ENCODE measurements at regions of chrX and their contacts with region 1.

Region 1: DNA sequence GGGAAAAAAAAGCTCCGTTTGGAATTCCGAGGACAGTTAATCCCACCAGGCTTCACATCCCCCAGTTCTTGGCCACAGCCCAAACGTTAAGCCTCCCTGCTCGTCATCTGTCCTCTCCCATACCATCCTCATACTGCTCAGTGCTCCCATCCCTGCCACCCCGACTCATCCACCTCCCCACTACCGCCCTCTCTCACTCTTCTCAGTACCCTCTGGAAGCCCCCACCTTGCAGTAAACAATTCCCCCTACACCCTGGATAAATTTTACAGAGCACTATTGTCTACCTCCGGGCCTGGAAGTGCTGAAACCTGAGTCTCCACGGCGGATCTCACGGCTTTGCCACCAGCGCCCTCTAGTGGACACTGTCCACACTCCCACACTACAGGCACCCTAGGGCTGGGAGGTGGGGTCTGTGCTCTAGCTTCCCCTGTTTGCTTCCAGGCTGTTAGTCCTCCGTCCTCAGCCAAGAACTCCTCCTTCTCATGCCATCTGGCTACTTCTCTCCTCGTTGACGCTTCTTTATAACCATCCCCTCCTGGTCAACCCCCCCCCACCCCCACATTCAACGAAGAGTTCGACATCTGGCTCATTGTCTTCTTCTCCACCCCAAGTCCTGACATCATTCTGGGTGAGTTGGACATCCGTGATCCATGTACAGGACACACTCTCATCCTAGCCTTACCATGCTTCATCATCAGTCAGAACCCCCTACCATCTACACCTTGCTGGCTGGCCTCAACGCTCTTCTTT is 54.5 kb downstream of the RTL9 start:
- DNase-seq: no peak
- H3K4me3 ChIP-seq: no peak overlapping the region
- CTCF ChIP-seq: peak; percentile 79

Region 2: DNA sequence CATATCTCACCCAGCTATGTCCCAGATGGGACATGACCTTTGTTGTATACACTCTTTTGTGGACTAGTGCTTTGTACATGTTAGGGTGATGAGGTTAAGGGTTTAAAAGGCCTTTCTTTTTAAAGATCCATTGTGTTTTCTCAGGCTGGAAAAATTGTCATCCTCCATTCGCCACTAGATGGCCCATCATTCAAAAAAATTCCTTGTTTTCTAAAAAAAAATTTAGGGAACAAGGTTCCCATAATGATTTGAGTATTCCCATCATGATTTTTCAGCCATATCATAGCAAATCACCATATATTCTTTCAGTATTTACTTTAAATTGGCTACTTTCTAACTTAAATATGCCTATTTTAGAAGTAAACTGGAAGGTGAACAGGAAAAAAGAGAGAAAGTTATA is 502.1 kb before region 1 on chrX:
- CTCF ChIA-PET with region 1: interaction called, 11 read pairs
- POLR2A ChIA-PET with region 1: no interaction called
- DNase-seq: no peak
- H3K4me3 ChIP-seq: no peak overlapping the region
- CTCF ChIP-seq: no peak

Region 3: GRCh38 chrX:110167952-110168451 is 245.1 kb before region 1 on chrX:
- CTCF ChIA-PET with region 1: interaction called, 970 read pairs
- POLR2A ChIA-PET with region 1: no interaction called
- DNase-seq: no peak
- H3K4me3 ChIP-seq: no peak overlapping the region
- CTCF ChIP-seq: peak; percentile 55

Region 4: GRCh38 chrX:110180176-110180927 is 232.8 kb before region 1 on chrX:
- CTCF ChIA-PET with region 1: interaction called, 20 read pairs
- POLR2A ChIA-PET with region 1: interaction called, 3 read pairs
- DNase-seq: no peak
- H3K4me3 ChIP-seq: no peak overlapping the region
- CTCF ChIP-seq: no peak

Region 5: DNA sequence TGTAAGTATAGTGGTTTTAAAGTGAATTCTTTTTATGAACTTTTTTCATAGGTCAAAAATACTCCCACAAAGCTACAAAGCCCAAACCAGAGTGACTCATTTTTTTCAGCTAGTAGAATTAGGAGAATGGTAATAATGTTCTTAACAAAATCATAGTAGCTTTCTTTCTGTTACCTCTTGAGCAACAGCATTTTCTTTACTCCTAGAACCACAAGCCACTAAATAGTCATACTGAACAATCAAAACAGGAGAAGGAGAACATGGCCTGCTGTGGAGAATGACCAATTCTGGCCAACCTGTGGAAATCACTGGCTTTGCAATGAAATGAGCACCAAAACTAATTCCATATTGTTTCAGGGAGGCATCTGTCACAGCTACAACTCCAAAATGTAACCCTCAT is 208.2 kb before region 1 on chrX:
- CTCF ChIA-PET with region 1: interaction called, 12 read pairs
- POLR2A ChIA-PET with region 1: no interaction called
- DNase-seq: no peak
- H3K4me3 ChIP-seq: no peak overlapping the region
- CTCF ChIP-seq: no peak

Region 6: DNA sequence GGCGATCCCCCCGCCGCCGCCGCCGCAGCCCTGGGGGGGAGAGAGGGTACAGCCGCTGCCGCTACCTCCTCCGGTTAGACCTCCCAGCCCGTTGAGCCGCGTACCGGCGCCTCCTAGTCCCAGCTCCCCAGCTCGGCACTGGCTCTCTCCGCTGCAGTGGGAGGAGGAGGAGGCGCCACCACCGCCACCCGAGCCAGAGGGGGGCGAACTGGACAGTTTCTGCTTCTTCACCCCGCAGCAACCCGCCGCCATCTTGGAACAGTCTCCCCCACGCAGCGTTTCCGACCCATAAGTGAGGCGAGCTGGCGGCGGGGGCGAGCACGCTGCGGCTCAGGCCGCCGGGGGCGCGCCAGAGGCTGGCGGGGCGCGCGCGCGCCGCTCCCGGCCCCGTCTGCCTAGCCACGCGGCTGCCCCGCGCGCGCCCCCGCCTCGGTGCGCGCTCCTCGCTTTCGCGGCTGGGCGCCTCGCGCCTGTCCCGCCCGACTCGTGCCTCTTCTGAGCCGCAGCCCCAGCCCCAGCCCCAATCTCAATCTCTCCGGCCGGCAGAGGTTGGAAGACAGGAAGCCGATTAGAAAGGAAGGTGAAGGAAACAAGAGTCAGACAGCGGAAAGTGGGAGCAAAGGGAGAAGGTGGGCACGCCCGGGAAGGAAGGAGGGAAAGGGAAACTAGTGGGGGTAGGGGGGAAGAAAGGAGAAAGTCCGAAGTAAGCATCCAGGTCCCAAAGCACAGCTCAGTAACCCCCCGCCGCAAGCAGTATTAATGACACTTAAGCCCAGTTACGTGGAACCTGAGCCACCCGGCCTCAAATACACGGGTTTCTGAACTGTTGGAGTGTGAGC is 95.1 kb before region 1 on chrX and contains the start of gene AMMECR1:
- CTCF ChIA-PET with region 1: interaction called, 58 read pairs
- POLR2A ChIA-PET with region 1: no interaction called
- DNase-seq: no peak
- H3K4me3 ChIP-seq: peak within 1 kb of the TSS; percentile 73
- CTCF ChIP-seq: no peak

Region 7: DNA sequence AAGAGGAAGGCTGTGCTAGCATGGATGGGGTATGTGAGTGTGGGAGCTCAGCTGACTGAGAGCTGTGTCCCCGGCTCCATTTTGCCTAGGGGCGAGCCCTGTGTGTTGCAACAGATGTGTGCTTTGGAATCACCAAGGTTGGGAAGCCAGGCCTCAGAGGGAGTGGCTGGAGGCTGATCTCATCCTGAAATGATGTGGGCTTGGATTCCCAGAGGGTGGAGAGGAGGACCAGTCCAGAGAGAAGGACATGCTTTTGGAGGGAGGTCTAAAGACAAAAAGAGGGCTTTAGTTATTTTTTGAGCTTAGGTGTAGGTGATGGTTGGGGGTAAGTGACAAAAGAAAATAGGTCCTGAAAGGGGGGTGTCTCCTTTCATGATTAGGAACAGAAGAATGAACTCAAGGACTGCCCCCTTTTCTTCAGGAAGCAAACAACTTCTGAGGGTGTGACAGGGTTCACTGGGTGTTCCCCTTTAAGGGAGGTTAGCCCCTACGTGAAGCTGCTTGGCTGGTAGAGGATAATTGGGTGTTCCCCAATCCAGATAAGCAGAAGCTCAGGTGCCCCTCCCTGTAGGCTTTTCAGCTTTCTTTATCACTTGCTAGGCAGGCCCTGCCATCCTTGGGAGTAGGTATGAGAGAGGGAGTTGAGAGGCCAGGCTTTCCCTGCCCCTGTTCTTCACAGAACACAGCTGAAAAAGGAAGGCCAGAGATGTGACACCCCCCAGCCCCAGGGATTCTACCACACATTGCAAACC is 10.5 kb before region 1 on chrX:
- CTCF ChIA-PET with region 1: interaction called, 44 read pairs
- POLR2A ChIA-PET with region 1: interaction called, 6 read pairs
- DNase-seq: no peak
- H3K4me3 ChIP-seq: no peak overlapping the region
- CTCF ChIP-seq: no peak

Region 8: DNA sequence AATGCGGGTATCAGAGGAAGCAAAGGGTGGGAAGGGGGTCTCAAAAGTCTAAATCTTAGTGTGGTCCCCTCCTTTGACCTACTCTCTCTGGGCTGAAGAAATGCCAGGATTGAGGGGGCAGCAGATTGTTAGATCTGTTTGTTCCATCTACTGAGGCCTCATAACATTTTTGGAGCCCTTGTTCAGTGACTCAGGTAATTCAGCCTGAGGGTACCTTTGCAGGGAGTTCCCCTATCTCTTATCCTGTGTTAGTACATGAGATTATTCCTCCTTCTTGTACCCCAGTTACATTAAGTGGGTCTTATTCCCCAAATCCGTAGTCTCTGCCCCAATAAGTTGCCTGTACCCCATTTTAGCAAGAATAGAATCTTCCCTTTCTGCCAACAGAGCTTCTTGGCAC is 24.5 kb after region 1 on chrX:
- CTCF ChIA-PET with region 1: no interaction called
- POLR2A ChIA-PET with region 1: no interaction called
- DNase-seq: no peak
- H3K4me3 ChIP-seq: no peak overlapping the region
- CTCF ChIP-seq: no peak